ENCODE measurements at regions of chr12 and their contacts with region 1.

Region 1: GRCh38 chr12:50246873-50247612 is 36.3 kb downstream of the LIMA1 start:
- DNase-seq: peak; percentile 91 to 93
- ATAC-seq: peak; percentile 83
- H3K4me3 ChIP-seq: no peak overlapping the region
- H3K27ac ChIP-seq: peak overlapping the region; percentile 70 to 89
- H3K4me1 ChIP-seq: peaks cover 7 to 10% of the 10 kb centered on the region in 2 donors
- H3K27me3 ChIP-seq: no peaks in the 10 kb centered on the region

Region 2: GRCh38 chr12:50187084-50187900 is 59.8 kb before region 1 on chr12:
- intact Hi-C with region 1: loop called in 1 of 2 experiments (anchors 2 kb)
- DNase-seq: no peak
- ATAC-seq: peak; percentile 47
- H3K4me3 ChIP-seq: no peak overlapping the region
- H3K27ac ChIP-seq: peak overlapping the region; percentile 58 to 90
- H3K4me1 ChIP-seq: peaks cover 5 to 8% of the 10 kb centered on the region in 2 donors
- H3K27me3 ChIP-seq: no peaks in the 10 kb centered on the region

Region 3: DNA sequence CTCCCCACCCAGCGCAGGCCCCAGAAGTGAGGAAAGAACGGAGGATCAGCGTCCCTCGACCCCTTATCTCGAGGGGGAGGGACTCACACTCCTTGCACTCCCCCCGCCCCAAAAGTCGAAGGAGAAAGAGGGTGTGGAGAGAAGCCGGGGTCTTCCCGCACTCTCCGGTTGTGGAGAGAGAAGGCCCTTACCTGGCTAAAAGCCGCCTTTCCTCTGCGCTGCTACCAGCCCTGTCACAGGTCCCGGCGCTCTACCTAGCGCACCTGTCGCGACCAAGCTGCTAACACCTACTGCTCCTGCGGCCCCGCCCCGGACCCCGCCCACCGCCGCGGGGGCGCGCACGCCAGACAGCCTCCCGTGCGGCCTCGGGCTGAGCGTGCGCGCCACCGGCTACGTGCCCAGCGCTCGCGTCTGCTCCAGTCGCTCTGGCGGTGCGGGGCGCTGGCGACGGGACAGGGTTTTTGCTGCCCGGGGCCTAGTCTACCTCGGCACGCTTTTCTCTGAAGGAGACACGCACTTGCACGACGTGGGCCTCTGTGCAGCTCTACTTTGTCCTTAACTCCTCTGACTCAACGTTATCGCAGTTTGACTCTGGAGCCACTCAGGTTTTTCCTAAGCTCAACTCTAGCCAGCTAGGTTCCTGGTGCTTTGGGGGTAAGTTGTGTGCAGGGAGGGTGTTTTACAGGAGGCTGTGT is 36.3 kb after region 1 on chr12 and contains the start of gene LIMA1:
- intact Hi-C with region 1: loop called (anchors 1 to 5 kb)
- DNase-seq: peak; percentile 93 to 97
- ATAC-seq: peak; percentile 99
- H3K4me3 ChIP-seq: peak within 1 kb of the TSS; percentile 67 to 81
- H3K27ac ChIP-seq: peak within 1 kb of the TSS in 1 of 2 donors; percentile 70
- H3K4me1 ChIP-seq: no peaks in the 10 kb centered on the region
- H3K27me3 ChIP-seq: no peaks in the 10 kb centered on the region
- total RNA-seq, gene LIMA1: 131 to 177 TPM

Measured in aorta (tissue), 5 donors.